Naive thymus-derived CD4-positive, alpha-beta T cell (primary cell): ENCODE measurements at regions of chr16 and their contacts with region 1.

Region 1: DNA sequence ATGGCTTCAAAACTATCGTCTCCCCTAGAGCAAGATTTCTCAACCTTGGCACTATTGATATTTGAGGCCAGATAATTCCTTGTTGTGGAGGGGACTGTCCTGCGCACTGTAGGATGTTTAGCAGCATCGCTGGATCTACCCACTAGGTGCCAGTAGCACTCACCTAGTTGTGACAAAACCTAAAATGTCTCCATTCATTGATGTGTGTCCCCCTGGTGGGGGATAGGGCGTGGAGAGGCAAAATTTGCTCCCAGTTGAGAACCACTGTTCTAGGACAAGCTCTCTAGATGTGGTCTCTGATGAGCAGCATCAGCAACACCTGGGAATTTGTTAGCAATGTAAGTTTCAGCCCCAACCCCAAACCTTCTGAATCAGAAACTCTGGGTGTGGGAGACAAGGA is 259.0 kb downstream of the XYLT1 start:
- DNase-seq: peak in 8 of 9 donors; percentile 4 to 50 (median 34)
- ATAC-seq: peak; percentile 77
- H3K4me3 ChIP-seq: no peak overlapping the region
- H3K4me3 Mint-ChIP-seq: no peak overlapping the region
- H3K27ac ChIP-seq: no peak overlapping the region
- H3K27ac Mint-ChIP-seq: peak overlapping the region in 2 of 9 donors; percentile 21 to 91
- H3K4me1 ChIP-seq: peaks cover 0 to 7% of the 10 kb centered on the region in 2 donors
- H3K4me1 Mint-ChIP-seq: peaks cover 10 to 41% (median 30%) of the 10 kb centered on the region in 7 donors
- H3K27me3 ChIP-seq: no peaks in the 10 kb centered on the region
- H3K27me3 Mint-ChIP-seq: no peaks in the 10 kb centered on the region

Region 2: GRCh38 chr16:17277977-17278381 is 66.2 kb after region 1 on chr16:
- CTCF ChIA-PET with region 1: interaction called, 3 read pairs
- POLR2A ChIA-PET with region 1: no interaction called
- intact Hi-C with region 1: loop called in 1 of 2 experiments (anchors 10 kb)
- DNase-seq: peak in 1 of 9 donors; percentile 11
- ATAC-seq: peak; percentile 34
- H3K4me3 ChIP-seq: no peak overlapping the region
- H3K4me3 Mint-ChIP-seq: no peak overlapping the region
- H3K27ac ChIP-seq: no peak overlapping the region
- H3K27ac Mint-ChIP-seq: peak overlapping the region in 2 of 9 donors; percentile 10 to 33
- H3K4me1 ChIP-seq: peaks cover 0 to 23% of the 10 kb centered on the region in 2 donors
- H3K4me1 Mint-ChIP-seq: peaks cover 29 to 71% (median 57%) of the 10 kb centered on the region in 7 donors
- H3K27me3 ChIP-seq: no peaks in the 10 kb centered on the region
- H3K27me3 Mint-ChIP-seq: no peaks in the 10 kb centered on the region